ENCODE measurements at regions of chr17 and their contacts with region 1.

Region 1: GRCh38 chr17:58344047-58344790 is 7.8 kb downstream of the SUPT4H1 start:
- DNase-seq: peak; percentile 56 to 95 (median 85)
- ATAC-seq: peak; percentile 76 to 83 (median 80)
- H3K4me3 ChIP-seq: peak overlapping the region; percentile 55 to 59
- H3K4me3 Mint-ChIP-seq: peak overlapping the region; percentile 84 to 100 (median 100)
- H3K27ac ChIP-seq: peak overlapping the region; percentile 97
- H3K27ac Mint-ChIP-seq: peak overlapping the region; percentile 98 to 99
- H3K4me1 ChIP-seq: peaks cover 69 to 84% of the 10 kb centered on the region in 2 experiments
- H3K4me1 Mint-ChIP-seq: peaks cover 91 to 98% (median 94%) of the 10 kb centered on the region in 3 donors
- H3K27me3 ChIP-seq: no peaks in the 10 kb centered on the region
- H3K27me3 Mint-ChIP-seq: no peaks in the 10 kb centered on the region

Region 2: DNA sequence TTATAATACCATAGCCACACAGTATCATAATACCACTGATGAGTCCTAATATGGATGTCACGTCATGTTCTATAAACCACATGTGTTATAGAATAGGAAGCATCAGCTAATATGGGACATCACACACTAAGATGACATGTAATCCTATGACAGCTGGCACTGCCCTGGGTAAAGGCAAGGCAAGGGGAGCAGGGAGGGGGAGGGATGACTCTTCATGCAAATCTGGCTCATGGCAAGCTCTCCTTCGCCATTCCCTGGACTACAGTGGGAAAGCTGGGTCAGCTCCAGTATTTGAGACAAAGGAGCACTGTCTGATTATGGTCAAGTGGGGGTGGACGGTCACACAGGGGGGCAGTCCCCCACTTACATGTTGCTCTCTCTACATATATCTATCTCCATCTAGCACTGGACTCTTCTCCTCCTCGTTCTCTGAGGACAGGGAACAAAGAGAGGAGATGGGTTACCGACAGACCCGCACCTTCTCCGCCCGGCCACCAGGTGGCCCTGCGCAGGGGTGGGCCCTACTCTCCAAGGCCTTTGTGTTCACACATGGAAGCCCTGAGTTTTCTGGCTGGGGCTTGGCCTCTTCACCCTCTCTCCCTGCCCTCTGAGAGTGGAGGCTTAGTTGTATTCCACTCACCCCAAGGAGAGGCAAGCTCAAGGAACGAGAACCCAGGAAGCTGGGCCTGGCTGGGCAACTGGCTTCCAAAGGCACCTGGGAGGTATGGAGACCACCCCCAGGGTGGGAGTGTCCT is 40.1 kb before region 1 on chr17:
- CTCF ChIA-PET with region 1: interaction called, 3 to 12 read pairs
- POLR2A ChIA-PET with region 1: no interaction called
- DNase-seq: peak in 34 of 35 experiments; percentile 28 to 73 (median 54)
- ATAC-seq: peak; percentile 85 to 90 (median 86)
- H3K4me3 ChIP-seq: no peak overlapping the region
- H3K4me3 Mint-ChIP-seq: no peak overlapping the region
- H3K27ac ChIP-seq: no peak overlapping the region
- H3K27ac Mint-ChIP-seq: no peak overlapping the region
- H3K4me1 ChIP-seq: peaks cover 0 to 9% of the 10 kb centered on the region in 2 experiments
- H3K4me1 Mint-ChIP-seq: peaks cover 0 to 6% (median 5%) of the 10 kb centered on the region in 3 donors
- H3K27me3 ChIP-seq: no peaks in the 10 kb centered on the region
- H3K27me3 Mint-ChIP-seq: no peaks in the 10 kb centered on the region

Region 3: GRCh38 chr17:58329035-58329809 is 15.0 kb before region 1 on chr17:
- CTCF ChIA-PET with region 1: interaction called, 6 to 38 read pairs
- POLR2A ChIA-PET with region 1: interaction called, 14 to 23 read pairs
- DNase-seq: peak; percentile 49 to 80 (median 62)
- ATAC-seq: peak; percentile 11 to 41 (median 22)
- H3K4me3 ChIP-seq: peak overlapping the region; percentile 57 to 90
- H3K4me3 Mint-ChIP-seq: peak overlapping the region; percentile 99 to 100 (median 100)
- H3K27ac ChIP-seq: peak overlapping the region; percentile 50
- H3K27ac Mint-ChIP-seq: peak overlapping the region; percentile 93 to 96
- H3K4me1 ChIP-seq: peaks cover 13 to 67% of the 10 kb centered on the region in 2 experiments
- H3K4me1 Mint-ChIP-seq: peaks cover 50 to 72% (median 55%) of the 10 kb centered on the region in 3 donors
- H3K27me3 ChIP-seq: no peaks in the 10 kb centered on the region
- H3K27me3 Mint-ChIP-seq: no peaks in the 10 kb centered on the region

Region 4: DNA sequence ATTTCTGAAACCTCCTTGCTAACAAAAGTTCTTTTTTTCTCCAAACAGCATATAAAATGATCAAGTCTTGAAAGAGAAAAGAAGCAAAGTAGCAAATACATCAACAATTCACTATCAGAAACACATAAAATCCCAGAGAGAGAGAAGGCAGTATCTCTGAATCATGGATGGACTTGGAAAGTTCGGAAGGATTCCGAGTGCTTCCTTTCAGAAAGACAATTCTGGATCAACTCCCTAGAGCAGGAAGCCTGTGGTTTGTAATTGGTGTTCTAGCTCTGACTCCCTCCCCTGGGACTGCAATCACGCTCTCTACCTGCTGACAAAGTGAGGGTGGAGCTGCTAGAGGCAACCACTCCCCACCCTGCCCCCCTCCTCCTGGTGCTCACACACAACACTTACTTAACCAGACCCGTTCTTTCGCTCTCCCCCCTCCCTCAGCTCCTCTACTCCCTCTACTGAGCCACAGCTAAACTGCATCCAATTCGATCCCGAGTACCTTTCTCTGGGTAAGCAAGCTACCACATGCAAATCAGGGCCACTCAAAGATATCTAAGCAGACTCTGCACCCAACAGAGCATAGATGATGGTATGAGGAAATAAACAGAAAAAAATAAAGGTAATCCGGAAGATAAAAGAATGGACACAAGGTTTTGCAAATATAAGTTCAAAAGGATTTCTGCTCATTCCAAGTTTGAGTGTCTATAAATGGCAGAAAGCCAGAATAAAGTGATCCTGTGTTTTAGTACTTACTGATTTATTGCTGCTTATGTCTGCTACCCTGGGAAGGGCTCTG is 73.3 kb after region 1 on chr17 and contains the start of gene RNF43:
- CTCF ChIA-PET with region 1: interaction called in 1 of 2 experiments, 24 read pairs
- POLR2A ChIA-PET with region 1: interaction called in 1 of 2 experiments, 3 read pairs
- DNase-seq: peak; percentile 58 to 95 (median 90)
- ATAC-seq: peak; percentile 100
- H3K4me3 ChIP-seq: no peak within 1 kb of the TSS
- H3K4me3 Mint-ChIP-seq: peak within 1 kb of the TSS in 1 of 3 donors; percentile 18
- H3K27ac ChIP-seq: peak within 1 kb of the TSS; percentile 53
- H3K27ac Mint-ChIP-seq: peak within 1 kb of the TSS; percentile 36 to 57
- H3K4me1 ChIP-seq: peaks cover 8 to 12% of the 10 kb centered on the region in 2 experiments
- H3K4me1 Mint-ChIP-seq: peaks cover 13 to 17% (median 16%) of the 10 kb centered on the region in 3 donors
- H3K27me3 ChIP-seq: no peaks in the 10 kb centered on the region
- H3K27me3 Mint-ChIP-seq: no peaks in the 10 kb centered on the region
- total RNA-seq, gene RNF43: 1.2 to 4.0 (median 1.8) TPM

Region 5: GRCh38 chr17:58447039-58447975 is 103.1 kb after region 1 on chr17:
- CTCF ChIA-PET with region 1: no interaction called
- POLR2A ChIA-PET with region 1: no interaction called
- DNase-seq: peak; percentile 2 to 76 (median 45)
- ATAC-seq: peak in 3 of 4 experiments; percentile 61 to 69 (median 68)
- H3K4me3 ChIP-seq: no peak overlapping the region
- H3K4me3 Mint-ChIP-seq: no peak overlapping the region
- H3K27ac ChIP-seq: no peak overlapping the region
- H3K27ac Mint-ChIP-seq: no peak overlapping the region
- H3K4me1 ChIP-seq: no peaks in the 10 kb centered on the region
- H3K4me1 Mint-ChIP-seq: peaks cover 5 to 7% (median 5%) of the 10 kb centered on the region in 3 donors
- H3K27me3 ChIP-seq: no peaks in the 10 kb centered on the region
- H3K27me3 Mint-ChIP-seq: no peaks in the 10 kb centered on the region

Region 6: GRCh38 chr17:58541249-58541648 is 197.0 kb after region 1 on chr17:
- CTCF ChIA-PET with region 1: no interaction called
- POLR2A ChIA-PET with region 1: no interaction called
- DNase-seq: no peak
- ATAC-seq: no peak
- H3K4me3 ChIP-seq: no peak overlapping the region
- H3K4me3 Mint-ChIP-seq: no peak overlapping the region
- H3K27ac ChIP-seq: no peak overlapping the region
- H3K27ac Mint-ChIP-seq: no peak overlapping the region
- H3K4me1 ChIP-seq: no peaks in the 10 kb centered on the region
- H3K4me1 Mint-ChIP-seq: no peaks in the 10 kb centered on the region
- H3K27me3 ChIP-seq: peaks cover 0 to 17% of the 10 kb centered on the region in 2 experiments
- H3K27me3 Mint-ChIP-seq: no peaks in the 10 kb centered on the region